ENCODE measurements at regions of chr7 and their contacts with region 1.

Region 1: GRCh38 chr7:134514663-134515062 is 12.7 kb upstream of the AKR1B10 start:
- DNase-seq: no peak
- ATAC-seq: peak; percentile 55 to 70
- H3K4me3 ChIP-seq: no peak overlapping the region
- H3K27ac ChIP-seq: peak overlapping the region in 3 of 4 donors; percentile 78 to 90 (median 86)
- H3K4me1 ChIP-seq: peaks cover 24 to 35% of the 10 kb centered on the region in 2 donors
- H3K27me3 ChIP-seq: no peaks in the 10 kb centered on the region
- CTCF ChIP-seq: peak; percentile 79 to 89 (median 81)
- POLR2A ChIP-seq: no peak

Region 2: DNA sequence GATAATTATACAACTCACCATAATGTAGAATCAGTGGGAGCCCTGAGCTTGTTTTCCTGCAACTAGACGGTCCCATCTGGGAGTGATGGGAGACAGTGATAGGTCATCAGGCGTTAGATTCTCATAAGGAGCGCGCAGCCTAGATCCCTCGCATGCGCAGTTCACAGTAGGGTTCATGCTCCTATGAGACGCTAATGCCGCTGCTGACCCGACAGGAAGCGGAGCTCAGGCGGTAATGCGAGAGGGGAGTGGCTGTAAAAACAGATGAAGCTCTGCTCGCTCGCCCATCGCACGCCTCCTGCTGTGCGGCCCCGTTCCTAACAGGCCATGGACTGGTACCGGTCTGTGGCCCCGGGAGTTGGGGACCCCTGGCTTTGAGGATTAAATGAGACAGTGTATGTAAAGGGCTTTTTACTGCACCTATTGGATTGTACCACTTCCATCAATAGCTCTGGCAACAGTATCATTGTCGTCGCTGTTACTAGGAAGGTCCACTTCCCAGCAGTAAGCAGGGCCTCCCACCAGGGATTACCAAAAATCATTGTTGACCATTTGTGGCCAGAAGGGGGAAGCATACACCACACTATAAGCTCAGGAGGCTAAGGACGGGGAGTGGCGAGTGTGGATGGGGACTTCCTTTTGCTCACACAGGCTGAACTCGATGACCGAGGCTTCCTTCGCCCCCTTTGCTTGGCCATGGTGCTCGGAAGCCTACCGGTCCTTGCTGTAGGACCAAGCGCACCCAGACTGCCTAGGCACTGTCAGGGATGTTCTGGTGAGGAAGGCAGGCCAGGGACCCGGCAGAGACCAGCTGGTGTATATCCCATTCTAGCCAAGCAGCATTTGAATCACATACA is 82.1 kb before region 1 on chr7:
- in situ Hi-C with region 1: loop called (anchors 5 to 10 kb)
- intact Hi-C with region 1: loop called (anchors 1 kb)
- DNase-seq: peak; percentile 67 to 81
- ATAC-seq: peak; percentile 99 to 100
- H3K4me3 ChIP-seq: peak overlapping the region; percentile 40 to 65 (median 54)
- H3K27ac ChIP-seq: peak overlapping the region; percentile 75 to 84 (median 82)
- H3K4me1 ChIP-seq: peaks cover 0 to 4% of the 10 kb centered on the region in 2 donors
- H3K27me3 ChIP-seq: no peaks in the 10 kb centered on the region
- CTCF ChIP-seq: peak; percentile 69 to 89 (median 81)
- POLR2A ChIP-seq: peak in 1 of 2 donors; percentile 56

Region 3: DNA sequence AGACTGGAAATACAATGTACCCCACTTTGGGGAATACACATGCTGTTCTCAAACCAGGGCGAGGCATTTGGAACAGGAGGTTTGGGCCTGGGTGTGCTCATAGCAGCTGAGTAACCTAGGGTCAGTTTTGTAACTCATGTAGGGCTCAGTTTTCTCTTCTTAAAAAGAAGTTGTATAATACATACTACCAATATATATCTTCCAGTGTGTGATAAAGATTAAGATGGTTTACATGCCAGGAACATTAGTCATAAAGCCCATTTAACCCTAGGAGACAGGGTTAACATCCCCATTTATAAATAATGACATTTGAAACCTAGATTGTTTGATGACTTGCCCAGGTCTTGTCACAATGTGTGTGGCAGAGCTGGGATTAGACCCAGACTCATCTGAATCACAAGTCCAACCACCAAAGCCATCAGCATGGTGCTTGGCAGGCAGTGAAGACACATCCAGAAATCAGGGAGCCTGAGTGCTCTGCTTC is 18.7 kb after region 1 on chr7:
- in situ Hi-C with region 1: no loop called
- intact Hi-C with region 1: loop called (anchors 1 kb)
- DNase-seq: peak; percentile 81 to 86
- ATAC-seq: peak; percentile 82 to 83
- H3K4me3 ChIP-seq: no peak overlapping the region
- H3K27ac ChIP-seq: peak overlapping the region; percentile 88 to 92 (median 90)
- H3K4me1 ChIP-seq: peaks cover 51 to 71% of the 10 kb centered on the region in 2 donors
- H3K27me3 ChIP-seq: no peaks in the 10 kb centered on the region
- CTCF ChIP-seq: no peak
- POLR2A ChIP-seq: no peak

Region 4: DNA sequence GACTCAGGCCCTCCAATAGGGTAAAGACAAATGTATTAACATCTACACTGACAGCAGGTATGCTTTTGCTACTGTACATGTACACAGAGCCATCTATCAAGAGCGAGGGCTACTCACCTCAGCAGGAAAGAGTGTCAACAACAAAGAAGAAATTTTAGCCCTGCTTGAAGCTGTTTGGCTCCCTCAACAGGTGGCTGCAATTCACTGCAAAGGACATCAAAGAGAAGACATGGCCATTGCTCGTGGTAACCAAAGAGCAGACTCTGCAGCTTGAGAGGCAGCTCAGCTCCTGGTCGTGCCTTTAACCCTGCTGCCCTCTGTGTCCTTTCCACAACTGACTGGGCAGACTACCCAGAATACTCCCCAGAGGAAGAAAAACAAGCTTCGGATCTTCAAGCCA is 39.3 kb after region 1 on chr7:
- in situ Hi-C with region 1: loop called in 2 of 4 experiments (anchors 5 kb)
- intact Hi-C with region 1: loop called (anchors 1 kb)
- DNase-seq: no peak
- ATAC-seq: no peak
- H3K4me3 ChIP-seq: no peak overlapping the region
- H3K27ac ChIP-seq: no peak overlapping the region
- H3K4me1 ChIP-seq: peaks cover 7 to 12% of the 10 kb centered on the region in 2 donors
- H3K27me3 ChIP-seq: no peaks in the 10 kb centered on the region
- CTCF ChIP-seq: peak in 1 of 5 experiments; percentile 17
- POLR2A ChIP-seq: no peak

Region 5: GRCh38 chr7:134613623-134614347 is 99.1 kb after region 1 on chr7:
- in situ Hi-C with region 1: loop called (anchors 10 to 25 kb)
- intact Hi-C with region 1: no loop called
- DNase-seq: peak in 1 of 2 donors; percentile 18
- ATAC-seq: peak; percentile 66 to 77
- H3K4me3 ChIP-seq: no peak overlapping the region
- H3K27ac ChIP-seq: peak overlapping the region in 3 of 4 donors; percentile 7 to 44 (median 41)
- H3K4me1 ChIP-seq: no peaks in the 10 kb centered on the region
- H3K27me3 ChIP-seq: no peaks in the 10 kb centered on the region
- CTCF ChIP-seq: no peak
- POLR2A ChIP-seq: no peak